ENCODE measurements at regions of chr19 and their contacts with region 1.

Region 1: DNA sequence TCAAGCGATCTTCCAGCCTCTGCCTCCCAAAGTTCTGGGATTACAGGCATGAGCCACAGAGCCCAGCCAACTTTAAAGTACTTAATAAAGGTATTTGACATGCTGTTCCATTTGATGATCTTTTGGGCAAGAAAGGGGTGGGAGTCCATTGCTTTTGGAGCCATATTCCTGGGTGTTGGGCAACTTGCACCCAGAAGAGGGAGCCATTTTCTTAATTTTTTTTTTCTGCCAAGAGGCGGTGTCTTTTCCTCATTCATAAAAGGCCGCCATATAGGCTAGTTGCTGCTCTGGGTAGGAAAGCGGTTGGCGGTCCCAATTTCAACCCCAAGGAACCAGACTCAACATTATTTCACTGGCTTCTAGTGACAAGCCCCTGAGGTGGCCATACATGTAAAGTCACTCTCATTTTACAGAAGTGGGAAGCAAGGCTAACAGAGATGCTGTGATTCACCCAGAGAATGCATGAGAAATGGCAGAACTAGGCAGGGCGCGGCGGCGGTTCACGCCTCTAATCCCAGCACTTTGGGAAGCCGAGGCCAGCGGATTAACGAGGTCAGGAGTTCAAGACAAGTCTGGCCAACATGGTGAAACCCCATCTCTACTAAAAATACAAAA is 139.6 kb downstream of the CACNA1A start:
- DNase-seq: peak; percentile 58
- H3K27ac ChIP-seq: no peak overlapping the region
- CTCF ChIP-seq: peak; percentile 55

Region 2: GRCh38 chr19:13681509-13681908 is 314.9 kb after region 1 on chr19:
- CTCF ChIA-PET with region 1: interaction called, 6 read pairs
- POLR2A ChIA-PET with region 1: interaction called, 12 read pairs
- DNase-seq: no peak
- H3K27ac ChIP-seq: peak overlapping the region; percentile 26; the same call in 1 of the 2 replicates
- CTCF ChIP-seq: no peak

Measured in RWPE1 (cell line).